ENCODE measurements at regions of chr16 and their contacts with region 1.

Region 1: DNA sequence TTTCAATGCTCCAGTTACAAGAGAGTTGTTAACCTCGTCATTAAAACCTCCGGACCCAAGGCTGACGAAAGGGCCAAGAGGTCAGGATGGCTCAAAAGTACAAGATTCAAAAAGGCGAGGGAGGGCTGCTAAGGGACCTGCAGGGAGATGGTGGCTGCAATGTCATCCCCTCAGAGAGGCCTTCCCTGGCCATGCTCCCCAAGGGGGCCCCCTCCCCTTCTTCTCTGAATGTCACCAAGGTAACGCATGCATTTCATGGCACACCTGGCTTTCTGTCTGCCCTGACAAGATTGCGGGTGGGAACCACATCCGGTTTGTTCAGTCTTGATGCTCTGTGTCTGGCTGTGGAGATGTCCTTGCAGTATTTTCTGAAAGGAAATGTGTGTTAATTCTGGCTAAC is 89.9 kb downstream of the C16orf78 start:
- DNase-seq: peak; percentile 92
- ATAC-seq: peak; percentile 93
- H3K4me3 Mint-ChIP-seq: peak overlapping the region; percentile 23
- H3K27ac Mint-ChIP-seq: peak overlapping the region; percentile 79
- H3K4me1 Mint-ChIP-seq: peaks cover 46% of the 10 kb centered on the region
- H3K27me3 Mint-ChIP-seq: no peaks in the 10 kb centered on the region

Region 2: GRCh38 chr16:49377196-49377755 is 86.3 kb before region 1 on chr16:
- CTCF ChIA-PET with region 1: no interaction called
- POLR2A ChIA-PET with region 1: no interaction called
- DNase-seq: no peak
- ATAC-seq: no peak
- H3K4me3 Mint-ChIP-seq: no peak overlapping the region
- H3K27ac Mint-ChIP-seq: no peak overlapping the region
- H3K4me1 Mint-ChIP-seq: no peaks in the 10 kb centered on the region
- H3K27me3 Mint-ChIP-seq: no peaks in the 10 kb centered on the region

Region 3: GRCh38 chr16:49419006-49419405 is 44.5 kb before region 1 on chr16:
- CTCF ChIA-PET with region 1: no interaction called
- POLR2A ChIA-PET with region 1: no interaction called
- DNase-seq: no peak
- ATAC-seq: no peak
- H3K4me3 Mint-ChIP-seq: no peak overlapping the region
- H3K27ac Mint-ChIP-seq: no peak overlapping the region
- H3K4me1 Mint-ChIP-seq: no peaks in the 10 kb centered on the region
- H3K27me3 Mint-ChIP-seq: no peaks in the 10 kb centered on the region

Region 4: GRCh38 chr16:49440156-49441065 is 23.1 kb before region 1 on chr16:
- CTCF ChIA-PET with region 1: interaction called, 11 read pairs
- POLR2A ChIA-PET with region 1: no interaction called
- DNase-seq: no peak
- ATAC-seq: no peak
- H3K4me3 Mint-ChIP-seq: no peak overlapping the region
- H3K27ac Mint-ChIP-seq: peak overlapping the region; percentile 82
- H3K4me1 Mint-ChIP-seq: peaks cover 31% of the 10 kb centered on the region
- H3K27me3 Mint-ChIP-seq: no peaks in the 10 kb centered on the region

Measured in activated CD8-positive, alpha-beta T cell treated with anti-CD3 and anti-CD28 coated beads, Interleukin-2, amount 10 ng/mL, durations not matched to agents 7 days and 5 days (primary cell).